ENCODE measurements at regions of chr15 and their contacts with region 1.

Region 1: DNA sequence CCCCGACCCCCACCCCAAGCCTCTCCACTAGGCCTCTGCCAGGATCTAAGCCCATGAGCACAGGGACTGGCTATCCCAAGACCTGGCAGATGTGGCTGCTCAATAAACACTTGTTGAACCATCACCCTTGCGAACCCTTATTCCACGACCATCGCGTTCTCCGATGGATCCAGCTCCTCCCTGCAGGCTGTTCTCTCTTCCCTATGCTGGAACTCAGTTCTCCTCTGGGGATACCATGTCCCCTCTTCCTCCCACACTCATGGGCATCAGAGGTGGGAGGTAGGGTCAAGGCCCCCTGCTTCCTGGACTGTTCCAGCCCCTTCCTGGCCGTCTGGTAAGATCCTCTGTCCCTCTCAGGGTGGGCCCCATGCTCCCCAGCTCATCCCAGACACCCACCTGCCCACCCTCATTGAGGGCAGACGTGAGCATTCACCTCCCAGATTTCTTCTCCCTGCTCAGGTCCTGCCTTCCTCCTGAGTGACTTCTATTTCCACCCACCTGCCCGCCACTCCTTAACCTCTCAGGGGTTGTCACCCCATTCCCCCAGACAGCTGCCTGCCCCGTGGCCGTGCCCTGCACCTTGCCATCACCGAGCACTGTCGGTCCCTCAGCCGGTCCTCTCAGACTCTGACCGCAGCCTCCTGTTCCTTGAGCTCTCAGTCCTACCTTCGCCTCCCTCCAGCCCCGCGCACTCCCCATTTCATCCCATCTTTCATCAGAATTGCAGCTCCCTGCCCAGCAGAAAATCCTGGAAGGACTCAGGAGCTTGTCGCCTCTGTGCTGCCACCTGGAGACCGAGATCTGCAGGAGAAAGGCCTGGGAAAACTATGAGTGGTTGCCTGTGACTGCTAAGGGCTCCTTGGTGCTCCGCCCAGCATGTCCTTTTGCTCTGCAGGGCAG is 42.0 kb downstream of the PML start:
- DNase-seq: peak; percentile 53 to 84 (median 71)
- H3K4me3 ChIP-seq: no peak overlapping the region
- H3K27ac ChIP-seq: peak overlapping the region in 1 of 5 donors; percentile 30
- H3K4me1 ChIP-seq: peaks cover 0 to 8% of the 10 kb centered on the region in 2 donors
- H3K27me3 ChIP-seq: no peaks in the 10 kb centered on the region
- CTCF ChIP-seq: peak; percentile 32 to 64 (median 51)
- POLR2A ChIP-seq: no peak

Region 2: DNA sequence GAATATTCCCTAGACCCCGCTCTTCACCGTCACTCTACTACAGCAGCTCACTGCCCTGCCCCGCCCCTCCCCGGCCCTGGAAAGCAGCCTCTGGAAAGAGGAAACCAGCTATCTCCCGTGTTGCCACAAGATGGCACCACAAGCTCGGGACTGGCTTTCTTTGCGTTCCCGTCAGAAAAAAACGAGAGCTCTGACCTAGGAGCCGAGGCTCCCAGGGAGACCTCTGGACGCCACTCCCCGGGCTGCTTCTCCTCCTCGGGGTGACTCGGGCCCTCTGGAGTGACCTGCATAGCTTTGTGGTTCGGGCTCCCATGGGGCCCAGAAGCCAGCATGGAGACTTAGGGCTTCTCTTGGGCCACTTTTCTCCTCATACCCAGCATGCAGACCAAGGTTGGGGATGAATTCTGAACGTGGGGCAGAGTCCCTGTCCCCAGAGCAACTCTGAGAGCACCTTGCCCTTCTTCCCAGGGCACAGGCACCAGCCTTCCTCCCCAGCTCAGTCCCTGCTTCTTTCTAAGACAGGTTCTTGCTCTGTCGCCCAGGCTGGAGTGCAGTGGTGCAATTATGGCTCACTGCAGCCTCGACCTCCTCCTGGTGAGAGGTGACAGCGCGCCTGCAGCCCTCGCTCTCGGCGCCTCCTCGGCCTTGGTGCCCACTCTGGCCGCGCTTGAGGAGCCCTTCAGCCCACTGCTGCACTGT is 63.4 kb before region 1 on chr15:
- intact Hi-C with region 1: loop called (anchors 2 to 5 kb)
- DNase-seq: peak; percentile 83 to 94 (median 89)
- H3K4me3 ChIP-seq: peak overlapping the region in 2 of 4 donors; percentile 7 to 22
- H3K27ac ChIP-seq: no peak overlapping the region
- H3K4me1 ChIP-seq: peaks cover 4 to 5% of the 10 kb centered on the region in 2 donors
- H3K27me3 ChIP-seq: no peaks in the 10 kb centered on the region
- CTCF ChIP-seq: peak; percentile 78 to 95 (median 88)
- POLR2A ChIP-seq: no peak